ENCODE measurements at regions of chr1 and their contacts with region 1.

Region 1: GRCh38 chr1:212455803-212456528 is 23.2 kb downstream of the NENF start:
- DNase-seq: peak; percentile 88 to 98 (median 94)
- H3K4me3 ChIP-seq: peak overlapping the region in 17 of 59 donors; percentile 3 to 42 (median 28)
- H3K27ac ChIP-seq: peak overlapping the region in 58 of 59 donors; percentile 31 to 99 (median 91)
- H3K27me3 ChIP-seq: no peaks in the 10 kb centered on the region
- CTCF ChIP-seq: peak; percentile 98 to 100 (median 99)

Region 2: GRCh38 chr1:212062832-212063438 is 393.0 kb before region 1 on chr1:
- intact Hi-C with region 1: loop called (anchors 2 kb)
- DNase-seq: no peak
- H3K4me3 ChIP-seq: no peak overlapping the region
- H3K27ac ChIP-seq: no peak overlapping the region
- H3K27me3 ChIP-seq: no peaks in the 10 kb centered on the region
- CTCF ChIP-seq: peak; percentile 63 to 91 (median 80)

Region 3: GRCh38 chr1:212284744-212285684 is 171.0 kb before region 1 on chr1 and contains the start of gene PPP2R5A:
- intact Hi-C with region 1: loop called (anchors 2 to 5 kb)
- DNase-seq: peak; percentile 97 to 100 (median 99)
- H3K4me3 ChIP-seq: peak within 1 kb of the TSS; percentile 67 to 100 (median 93)
- H3K27ac ChIP-seq: peak within 1 kb of the TSS; percentile 86 to 100 (median 98)
- H3K27me3 ChIP-seq: no peaks in the 10 kb centered on the region
- CTCF ChIP-seq: peak in 46 of 56 donors; percentile 3 to 61 (median 28)
- total RNA-seq, gene PPP2R5A: 20.1 to 45.5 (median 29.2) TPM

Region 4: DNA sequence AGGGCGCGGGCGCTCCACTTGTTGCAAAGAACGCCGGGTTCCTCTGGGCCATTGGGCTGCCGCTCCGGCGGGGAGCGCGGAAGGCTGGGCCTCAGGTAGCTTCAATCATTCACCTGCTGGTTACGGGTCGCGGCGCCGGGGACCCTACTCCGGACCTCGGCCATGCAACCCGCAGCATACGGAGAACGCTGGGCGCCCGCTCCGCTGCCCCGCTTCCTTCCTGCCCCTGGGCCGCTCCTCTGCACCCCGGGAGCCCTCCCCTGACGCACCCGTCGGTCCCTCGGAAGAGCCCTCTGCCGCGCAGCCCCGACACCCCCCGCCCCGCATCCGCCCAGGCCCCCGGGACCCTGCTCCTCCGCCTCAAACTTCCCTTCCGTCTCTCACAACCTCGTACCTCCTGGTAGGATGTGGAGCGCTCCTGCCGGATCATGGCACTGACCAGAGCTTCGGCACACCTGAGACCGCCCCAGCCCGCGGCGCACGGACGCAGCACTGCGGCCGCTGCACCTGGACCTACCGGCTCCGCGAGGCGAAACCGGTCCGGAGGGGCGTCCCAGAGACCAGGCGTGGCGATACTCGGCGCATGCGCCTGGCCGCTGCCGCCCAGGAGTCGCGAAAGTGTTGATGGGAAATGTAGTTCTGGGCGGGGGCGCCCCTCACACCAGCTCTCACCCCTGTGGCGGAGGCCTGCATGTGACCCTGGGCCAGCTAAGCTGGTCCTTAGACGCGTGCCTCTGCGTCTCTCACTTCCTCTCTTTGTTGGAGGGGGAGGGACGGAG is 41.4 kb before region 1 on chr1 and contains the start of gene PACC1:
- intact Hi-C with region 1: loop called in 1 of 2 experiments (anchors 5 kb)
- DNase-seq: peak; percentile 84 to 95 (median 87)
- H3K4me3 ChIP-seq: peak within 1 kb of the TSS; percentile 64 to 98 (median 89)
- H3K27ac ChIP-seq: peak within 1 kb of the TSS; percentile 76 to 99 (median 95)
- H3K27me3 ChIP-seq: no peaks in the 10 kb centered on the region
- CTCF ChIP-seq: peak in 38 of 56 donors; percentile 6 to 65 (median 28)
- total RNA-seq, gene PACC1: 6.9 to 82.7 (median 24.1) TPM

Measured in dorsolateral prefrontal cortex (tissue), 120 donors.